ENCODE measurements at regions of chr14 and their contacts with region 1.

Region 1: GRCh38 chr14:50038398-50039119 is 77.8 kb downstream of the VCPKMT start:
- DNase-seq: peak; percentile 90
- H3K4me3 Mint-ChIP-seq: peak overlapping the region; percentile 74
- H3K27ac Mint-ChIP-seq: peak overlapping the region; percentile 99
- H3K4me1 Mint-ChIP-seq: peaks cover 64% of the 10 kb centered on the region
- H3K27me3 Mint-ChIP-seq: no peaks in the 10 kb centered on the region

Region 2: DNA sequence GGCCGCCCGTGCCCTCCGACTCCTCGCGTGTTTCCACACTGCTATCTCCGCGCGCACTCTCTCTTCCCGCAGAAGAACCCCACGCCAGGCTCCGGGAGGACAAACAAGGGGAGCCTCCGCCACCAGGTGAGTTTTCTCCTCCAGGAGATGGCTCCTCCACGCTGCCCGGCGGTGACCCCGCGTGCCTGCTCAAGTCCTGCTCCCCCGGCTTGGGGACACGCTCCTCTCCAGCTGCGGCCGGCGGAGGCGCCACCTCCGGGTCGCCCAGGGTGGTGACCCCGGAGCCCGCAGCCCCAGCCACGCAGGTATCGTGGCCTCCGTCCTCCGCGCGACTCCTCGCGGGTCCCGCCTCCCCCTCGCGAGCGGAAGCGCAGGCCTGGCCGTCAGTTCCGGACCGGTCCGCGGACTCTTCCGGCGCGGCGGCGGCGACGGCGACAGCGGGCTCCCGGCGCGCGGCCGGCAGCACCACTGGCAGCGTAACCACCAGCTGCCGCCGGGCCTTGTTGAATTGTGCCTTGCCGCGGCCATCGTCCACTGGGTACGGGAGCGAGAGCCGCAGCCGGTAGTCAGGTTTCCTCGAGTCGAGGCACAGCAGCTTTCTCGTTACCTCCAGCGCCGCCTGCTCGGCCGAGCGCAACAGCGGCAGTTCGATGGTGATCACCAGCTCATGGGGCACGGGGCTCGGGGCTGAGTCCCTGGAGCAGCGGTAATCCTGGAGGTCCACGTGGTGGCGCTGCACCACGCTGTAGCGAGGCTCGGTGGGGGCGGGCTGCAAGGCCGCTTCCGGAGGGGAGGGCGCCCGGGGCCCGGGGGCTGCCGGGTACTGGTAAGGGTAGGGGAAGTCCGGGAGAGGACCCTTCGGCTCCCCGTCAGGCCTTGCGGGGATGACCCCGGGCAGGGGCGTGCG is 404.7 kb before region 1 on chr14:
- CTCF ChIA-PET with region 1: no interaction called
- POLR2A ChIA-PET with region 1: interaction called, 3 read pairs
- intact Hi-C with region 1: loop called (anchors 1 kb)
- DNase-seq: peak; percentile 97
- H3K4me3 Mint-ChIP-seq: peak overlapping the region; percentile 91
- H3K27ac Mint-ChIP-seq: peak overlapping the region; percentile 95
- H3K4me1 Mint-ChIP-seq: peaks cover 42% of the 10 kb centered on the region
- H3K27me3 Mint-ChIP-seq: no peaks in the 10 kb centered on the region

Region 3: GRCh38 chr14:49892636-49893308 is 145.8 kb before region 1 on chr14 and contains the start of gene ARF6:
- CTCF ChIA-PET with region 1: interaction called, 4 read pairs
- POLR2A ChIA-PET with region 1: interaction called, 36 read pairs
- intact Hi-C with region 1: loop called (anchors 1 kb)
- DNase-seq: peak; percentile 98
- H3K4me3 Mint-ChIP-seq: peak within 1 kb of the TSS; percentile 90
- H3K27ac Mint-ChIP-seq: peak within 1 kb of the TSS; percentile 93
- H3K4me1 Mint-ChIP-seq: peaks cover 18% of the 10 kb centered on the region
- H3K27me3 Mint-ChIP-seq: no peaks in the 10 kb centered on the region
- total RNA-seq, gene ARF6: 198 to 202 TPM

Region 4: DNA sequence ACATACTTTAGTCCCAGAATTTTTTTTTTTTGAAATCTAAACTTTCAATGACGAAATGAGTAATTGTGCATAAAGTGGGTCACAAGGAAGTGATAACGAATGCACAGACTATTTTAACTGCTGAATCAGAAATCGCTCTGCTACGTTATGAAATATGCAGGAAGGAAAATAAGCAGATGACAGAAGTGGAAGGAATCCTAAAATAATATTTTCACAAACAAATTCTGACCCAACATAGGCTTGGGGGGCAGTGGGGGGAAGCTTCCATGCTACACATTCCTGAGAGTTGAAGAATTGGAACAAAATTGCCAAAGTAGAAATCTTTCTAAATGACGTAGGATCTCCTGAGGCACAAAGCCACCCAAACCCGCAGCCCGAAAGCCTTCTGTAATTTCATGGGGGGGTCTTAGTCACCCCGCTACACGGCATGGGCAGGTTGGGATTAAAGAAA is 56.0 kb before region 1 on chr14:
- CTCF ChIA-PET with region 1: no interaction called
- POLR2A ChIA-PET with region 1: interaction called, 9 read pairs
- intact Hi-C with region 1: loop called (anchors 1 kb)
- DNase-seq: peak; percentile 44
- H3K4me3 Mint-ChIP-seq: peak overlapping the region; percentile 54
- H3K27ac Mint-ChIP-seq: peak overlapping the region; percentile 82
- H3K4me1 Mint-ChIP-seq: peaks cover 81% of the 10 kb centered on the region
- H3K27me3 Mint-ChIP-seq: no peaks in the 10 kb centered on the region

Region 5: DNA sequence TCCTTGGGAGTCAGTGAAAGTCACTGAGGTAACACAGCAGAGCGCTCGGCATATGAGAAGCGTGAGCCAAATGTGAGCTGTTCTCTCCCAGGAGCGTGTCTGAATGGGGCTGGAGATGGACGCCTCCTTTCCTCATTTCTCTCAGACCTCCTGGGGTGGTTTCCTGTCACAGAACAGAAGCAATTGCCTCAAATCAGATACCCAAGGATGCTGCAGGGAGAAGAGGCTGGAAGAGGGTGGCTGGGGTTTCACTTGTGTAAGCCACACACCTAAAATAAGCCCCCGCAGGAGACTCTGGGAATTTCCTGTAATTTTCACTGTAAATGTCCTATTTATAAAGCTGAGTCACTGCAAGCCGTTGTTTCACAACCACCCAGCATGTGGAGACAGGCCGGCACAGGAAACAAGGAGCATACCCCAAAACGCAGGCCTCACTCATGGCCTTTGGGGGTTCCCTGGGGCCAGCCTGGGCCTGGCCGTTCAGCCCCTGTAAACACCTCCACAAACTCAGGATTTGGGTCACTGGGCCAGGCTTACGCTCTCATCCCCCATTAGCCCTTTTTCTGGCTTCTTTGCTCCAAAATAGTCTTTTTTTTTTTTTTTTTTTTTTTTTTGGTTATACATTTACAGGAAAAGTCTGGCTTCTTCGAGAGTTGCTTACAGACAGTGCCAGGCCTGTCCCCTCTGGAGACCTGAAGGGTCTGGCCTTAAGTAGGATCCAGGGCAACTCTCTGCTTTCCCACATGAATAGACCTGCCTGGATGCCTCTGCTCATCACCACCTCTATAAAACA is 22.5 kb after region 1 on chr14:
- CTCF ChIA-PET with region 1: interaction called, 64 read pairs
- POLR2A ChIA-PET with region 1: interaction called, 137 read pairs
- intact Hi-C with region 1: loop called (anchors 1 kb)
- DNase-seq: peak; percentile 71
- H3K4me3 Mint-ChIP-seq: peak overlapping the region; percentile 96
- H3K27ac Mint-ChIP-seq: peak overlapping the region; percentile 99
- H3K4me1 Mint-ChIP-seq: peaks cover 73% of the 10 kb centered on the region
- H3K27me3 Mint-ChIP-seq: no peaks in the 10 kb centered on the region

Region 6: DNA sequence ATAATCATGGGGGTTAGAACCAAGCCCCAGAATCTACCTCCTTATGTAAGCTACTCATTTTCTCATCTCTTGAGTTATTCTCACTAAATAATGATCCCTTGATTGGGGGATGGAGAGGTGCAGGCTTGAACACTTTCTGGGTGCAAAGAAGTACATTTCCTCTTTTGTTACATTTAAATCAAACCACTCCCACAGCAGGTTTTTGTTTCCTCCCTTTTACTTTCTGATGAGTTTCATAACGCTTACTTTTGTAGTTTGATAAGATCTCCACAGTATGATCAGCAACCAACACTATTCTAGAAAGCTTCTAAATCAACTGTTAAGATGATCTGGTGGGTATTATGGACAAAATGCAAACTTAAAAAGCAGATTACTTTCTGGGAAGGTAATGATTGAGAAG is 57.3 kb after region 1 on chr14:
- CTCF ChIA-PET with region 1: interaction called, 4 read pairs
- POLR2A ChIA-PET with region 1: interaction called, 11 read pairs
- intact Hi-C with region 1: no loop called
- DNase-seq: no peak
- H3K4me3 Mint-ChIP-seq: peak overlapping the region; percentile 28
- H3K27ac Mint-ChIP-seq: peak overlapping the region; percentile 67
- H3K4me1 Mint-ChIP-seq: peaks cover 57% of the 10 kb centered on the region
- H3K27me3 Mint-ChIP-seq: no peaks in the 10 kb centered on the region

Region 7: DNA sequence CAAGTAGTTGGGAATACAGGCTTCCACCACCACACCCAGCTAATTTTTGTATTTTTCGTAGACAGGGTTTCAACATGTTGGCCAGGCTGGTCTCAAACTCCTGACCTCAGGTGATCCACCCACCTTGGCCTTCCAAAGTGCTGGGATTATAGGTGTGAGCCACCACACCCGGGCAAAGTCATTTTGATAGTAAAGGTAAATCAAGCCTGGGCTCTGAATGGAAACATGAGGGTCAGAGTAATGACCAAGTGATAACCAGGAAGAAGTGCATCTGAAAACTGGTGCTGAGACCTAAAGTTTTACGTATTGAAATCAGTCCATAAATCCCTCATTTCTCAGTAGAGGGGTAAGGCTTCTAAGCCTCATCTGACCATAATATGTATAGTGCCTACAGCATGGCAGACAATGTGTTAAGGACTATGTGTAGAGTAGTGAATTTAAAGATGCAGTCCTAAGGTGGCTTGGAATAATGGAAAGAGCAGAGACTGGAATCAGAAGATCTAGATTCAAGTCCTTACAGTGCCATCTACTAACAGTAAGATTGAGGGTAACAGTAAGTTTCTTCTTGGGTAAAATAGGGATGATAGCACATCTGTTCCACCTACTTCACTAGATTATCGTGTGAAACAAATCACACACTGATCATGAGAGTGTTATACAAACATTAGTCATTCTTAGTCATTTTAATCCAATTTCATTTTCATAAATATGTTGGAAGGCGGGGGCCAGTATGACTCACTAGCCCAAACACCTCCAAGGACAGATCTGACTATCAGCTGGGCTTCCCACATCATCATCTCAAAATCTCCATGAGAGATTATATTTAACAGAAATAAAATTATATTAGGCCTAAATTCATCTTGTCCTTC is 482.6 kb after region 1 on chr14:
- CTCF ChIA-PET with region 1: no interaction called
- POLR2A ChIA-PET with region 1: interaction called, 3 read pairs
- intact Hi-C with region 1: loop called (anchors 1 kb)
- DNase-seq: peak; percentile 84
- H3K4me3 Mint-ChIP-seq: peak overlapping the region; percentile 25
- H3K27ac Mint-ChIP-seq: peak overlapping the region; percentile 85
- H3K4me1 Mint-ChIP-seq: peaks cover 56% of the 10 kb centered on the region
- H3K27me3 Mint-ChIP-seq: no peaks in the 10 kb centered on the region

Region 8: GRCh38 chr14:51006781-51007211 is 968.2 kb after region 1 on chr14:
- CTCF ChIA-PET with region 1: no interaction called
- POLR2A ChIA-PET with region 1: no interaction called
- intact Hi-C with region 1: no loop called
- DNase-seq: no peak
- H3K4me3 Mint-ChIP-seq: no peak overlapping the region
- H3K27ac Mint-ChIP-seq: no peak overlapping the region
- H3K4me1 Mint-ChIP-seq: no peaks in the 10 kb centered on the region
- H3K27me3 Mint-ChIP-seq: peaks cover 5% of the 10 kb centered on the region